ENCODE measurements at regions of chr14 and their contacts with region 1.

Region 1: DNA sequence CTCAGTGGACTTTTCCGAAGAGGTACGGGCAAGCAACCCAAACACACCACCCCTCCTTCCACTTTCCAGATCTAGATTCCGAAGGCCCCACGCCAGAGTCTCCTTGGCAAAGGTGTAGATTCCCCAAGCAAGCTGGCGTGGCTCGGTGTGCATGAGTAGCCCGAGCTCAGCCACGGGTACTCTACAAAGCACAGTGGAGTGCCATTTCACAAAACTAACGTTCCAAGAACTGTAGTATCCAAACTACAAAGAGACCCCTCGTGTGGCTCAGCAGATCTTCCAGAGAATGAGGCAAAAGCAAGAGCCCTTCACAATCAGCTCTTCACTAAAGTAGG is 72.1 kb downstream of the FOXN3 start:
- DNase-seq: no peak
- ATAC-seq: no peak
- H3K4me3 Mint-ChIP-seq: no peak overlapping the region
- H3K27ac Mint-ChIP-seq: no peak overlapping the region
- H3K4me1 Mint-ChIP-seq: peaks cover 39% of the 10 kb centered on the region
- H3K27me3 Mint-ChIP-seq: no peaks in the 10 kb centered on the region
- CTCF ChIP-seq: no peak

Region 2: DNA sequence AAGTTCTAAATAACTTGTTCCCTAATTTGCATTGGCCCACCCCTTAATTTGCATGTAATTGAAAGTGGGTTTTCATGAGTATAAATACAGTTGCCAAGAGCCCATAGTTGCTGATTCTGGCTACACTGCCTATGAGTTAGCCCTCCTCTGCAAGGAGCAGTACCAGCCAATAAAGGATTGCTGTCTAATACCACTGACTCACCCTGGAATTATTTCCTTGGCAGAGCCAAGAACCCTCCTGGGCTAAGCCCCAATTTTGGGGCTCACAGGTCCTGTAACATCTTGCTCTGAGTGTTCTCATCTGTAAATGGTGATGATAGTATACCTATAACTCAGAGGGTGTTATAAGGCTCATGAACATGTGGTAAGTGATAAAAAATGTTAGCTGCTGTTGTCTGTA is 513.6 kb before region 1 on chr14:
- CTCF ChIA-PET with region 1: no interaction called
- POLR2A ChIA-PET with region 1: no interaction called
- intact Hi-C with region 1: no loop called
- DNase-seq: no peak
- ATAC-seq: no peak
- H3K4me3 Mint-ChIP-seq: no peak overlapping the region
- H3K27ac Mint-ChIP-seq: no peak overlapping the region
- H3K4me1 Mint-ChIP-seq: peaks cover 6% of the 10 kb centered on the region
- H3K27me3 Mint-ChIP-seq: no peaks in the 10 kb centered on the region
- CTCF ChIP-seq: no peak

Region 3: DNA sequence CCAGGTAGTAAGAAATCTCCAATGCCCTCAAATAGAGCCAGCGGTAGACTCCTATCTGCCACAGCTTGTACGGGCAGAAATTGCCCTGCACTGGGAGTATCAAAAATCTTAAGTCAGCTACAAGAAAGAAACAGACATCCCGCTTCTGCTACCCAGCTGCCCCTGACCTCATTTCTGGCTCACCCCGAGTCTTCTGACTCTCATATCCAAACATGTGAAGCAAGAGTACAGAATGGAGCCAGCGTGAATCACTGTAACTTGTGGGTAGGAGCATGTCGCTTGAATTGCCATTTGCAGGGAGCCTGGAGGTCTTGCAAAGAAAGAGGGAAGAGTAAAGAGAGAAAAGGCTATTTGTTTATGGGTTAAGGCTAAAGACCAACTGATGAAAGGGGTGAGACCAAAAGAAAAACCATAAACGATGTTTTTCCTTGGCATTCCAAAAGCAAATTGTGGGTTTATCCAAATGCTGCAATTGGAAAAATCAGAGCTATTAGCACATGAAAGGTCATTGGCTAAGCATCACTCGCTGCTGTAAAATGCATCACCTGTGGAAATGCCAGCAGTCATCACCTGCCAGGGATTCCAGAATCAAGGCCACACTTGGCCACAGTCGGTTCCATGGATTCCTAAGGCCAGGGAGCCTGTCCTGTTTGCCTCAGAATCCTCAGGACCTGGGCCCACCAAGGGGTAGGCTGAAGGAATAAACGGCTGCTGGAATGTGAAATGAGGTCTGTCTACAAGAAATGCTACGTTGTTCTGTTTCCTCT is 14.5 kb before region 1 on chr14:
- CTCF ChIA-PET with region 1: no interaction called
- POLR2A ChIA-PET with region 1: no interaction called
- intact Hi-C with region 1: loop called (anchors 2 kb)
- DNase-seq: no peak
- ATAC-seq: no peak
- H3K4me3 Mint-ChIP-seq: peak overlapping the region; percentile 5
- H3K27ac Mint-ChIP-seq: peak overlapping the region; percentile 79
- H3K4me1 Mint-ChIP-seq: peaks cover 60% of the 10 kb centered on the region
- H3K27me3 Mint-ChIP-seq: no peaks in the 10 kb centered on the region
- CTCF ChIP-seq: no peak

Region 4: DNA sequence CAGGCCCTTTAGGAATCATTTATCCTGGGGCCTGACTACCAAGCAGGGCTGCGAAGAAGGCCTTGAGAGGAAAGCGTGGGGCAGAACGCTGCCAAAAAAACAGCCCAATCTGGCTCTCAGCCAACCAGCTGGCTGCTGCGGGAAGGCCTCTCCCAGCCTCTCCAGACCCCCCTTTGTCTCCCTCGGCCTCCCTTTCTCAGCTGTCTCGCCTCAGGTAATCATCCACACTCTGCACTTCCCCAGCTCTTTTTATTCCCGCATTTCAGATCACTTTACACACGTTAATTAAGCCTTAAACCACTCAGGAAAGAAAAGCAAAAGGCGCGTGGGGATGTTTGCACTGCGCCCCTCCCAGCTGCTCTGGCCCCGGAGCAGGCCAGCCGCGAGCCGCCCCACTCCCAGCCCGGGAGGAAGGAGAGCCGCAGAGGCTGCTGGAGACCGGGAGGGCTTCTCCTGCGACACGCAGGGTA is 280.4 kb after region 1 on chr14:
- CTCF ChIA-PET with region 1: no interaction called
- POLR2A ChIA-PET with region 1: no interaction called
- intact Hi-C with region 1: no loop called
- DNase-seq: no peak
- ATAC-seq: no peak
- H3K4me3 Mint-ChIP-seq: no peak overlapping the region
- H3K27ac Mint-ChIP-seq: no peak overlapping the region
- H3K4me1 Mint-ChIP-seq: peaks cover 41% of the 10 kb centered on the region
- H3K27me3 Mint-ChIP-seq: no peaks in the 10 kb centered on the region
- CTCF ChIP-seq: no peak

Region 5: GRCh38 chr14:89755816-89756215 is 410.9 kb after region 1 on chr14:
- CTCF ChIA-PET with region 1: no interaction called
- POLR2A ChIA-PET with region 1: no interaction called
- intact Hi-C with region 1: no loop called
- DNase-seq: no peak
- ATAC-seq: no peak
- H3K4me3 Mint-ChIP-seq: no peak overlapping the region
- H3K27ac Mint-ChIP-seq: no peak overlapping the region
- H3K4me1 Mint-ChIP-seq: peaks cover 2% of the 10 kb centered on the region
- H3K27me3 Mint-ChIP-seq: no peaks in the 10 kb centered on the region
- CTCF ChIP-seq: no peak